Vagina (tissue), 2 donors: ENCODE measurements at regions of chr18 and their contacts with region 1.

Region 1: GRCh38 chr18:44771956-44772917 is 91.5 kb downstream of the SETBP1 start:
- DNase-seq: no peak
- H3K4me3 ChIP-seq: no peak overlapping the region
- H3K27ac ChIP-seq: peak overlapping the region; percentile 49
- H3K4me1 ChIP-seq: peaks cover 23% of the 10 kb centered on the region
- H3K27me3 ChIP-seq: no peaks in the 10 kb centered on the region
- CTCF ChIP-seq: no peak
- POLR2A ChIP-seq: no peak

Region 2: GRCh38 chr18:44679056-44679905 is 93.0 kb before region 1 on chr18:
- intact Hi-C with region 1: loop called (anchors 10 kb)
- DNase-seq: no peak
- H3K4me3 ChIP-seq: peak overlapping the region; percentile 67 to 94
- H3K27ac ChIP-seq: peak overlapping the region; percentile 96
- H3K4me1 ChIP-seq: peaks cover 39% of the 10 kb centered on the region
- H3K27me3 ChIP-seq: no peaks in the 10 kb centered on the region
- CTCF ChIP-seq: peak; percentile 11 to 72 (median 58)
- POLR2A ChIP-seq: peak in 1 of 2 donors; percentile 87